BJ (cell line): ENCODE measurements at regions of chr7 and their contacts with region 1.

Region 1: GRCh38 chr7:74289018-74289658 is at the start of gene CLIP2:
- DNase-seq: no peak
- H3K4me3 ChIP-seq: peak within 1 kb of the TSS; percentile 94
- H3K27me3 ChIP-seq: no peaks in the 10 kb centered on the region
- CTCF ChIP-seq: no peak
- polyA plus RNA-seq, gene CLIP2: 4.0 and 5.6 TPM in 2 replicates

Region 2: DNA sequence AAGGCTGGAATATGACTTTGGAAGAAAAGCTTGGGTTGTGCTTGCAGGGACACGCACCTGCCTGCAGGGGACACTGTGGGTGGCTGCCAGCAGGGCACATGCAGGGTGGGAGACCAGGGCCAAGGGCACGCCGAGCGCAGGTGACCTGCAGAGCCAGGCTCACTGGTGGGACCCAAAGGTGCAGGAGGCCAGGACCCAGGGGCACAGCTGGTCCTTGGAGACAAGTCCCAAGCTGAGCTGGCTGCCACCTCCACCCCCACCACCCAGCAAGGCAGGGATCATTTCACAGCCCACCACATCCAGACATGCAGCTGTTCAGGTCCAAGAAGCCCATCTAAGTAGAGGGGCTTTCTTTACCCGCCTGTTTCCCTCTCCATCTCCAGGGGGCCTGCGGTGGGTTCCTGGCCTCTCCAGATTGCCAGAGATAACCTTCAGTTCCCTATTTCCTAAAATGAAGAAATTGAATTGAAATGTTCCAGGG is 13.7 kb before region 1 on chr7:
- CTCF ChIA-PET with region 1: interaction called, 15 read pairs
- POLR2A ChIA-PET with region 1: interaction called, 3 read pairs
- DNase-seq: no peak
- H3K4me3 ChIP-seq: no peak overlapping the region
- H3K27me3 ChIP-seq: no peaks in the 10 kb centered on the region
- CTCF ChIP-seq: peak; percentile 57

Region 3: GRCh38 chr7:74395745-74396311 is 106.7 kb after region 1 on chr7:
- CTCF ChIA-PET with region 1: interaction called, 14 read pairs
- POLR2A ChIA-PET with region 1: no interaction called
- DNase-seq: no peak
- H3K4me3 ChIP-seq: no peak overlapping the region
- H3K27me3 ChIP-seq: no peaks in the 10 kb centered on the region
- CTCF ChIP-seq: no peak